ENCODE measurements at regions of chr9 and their contacts with region 1.

Region 1: DNA sequence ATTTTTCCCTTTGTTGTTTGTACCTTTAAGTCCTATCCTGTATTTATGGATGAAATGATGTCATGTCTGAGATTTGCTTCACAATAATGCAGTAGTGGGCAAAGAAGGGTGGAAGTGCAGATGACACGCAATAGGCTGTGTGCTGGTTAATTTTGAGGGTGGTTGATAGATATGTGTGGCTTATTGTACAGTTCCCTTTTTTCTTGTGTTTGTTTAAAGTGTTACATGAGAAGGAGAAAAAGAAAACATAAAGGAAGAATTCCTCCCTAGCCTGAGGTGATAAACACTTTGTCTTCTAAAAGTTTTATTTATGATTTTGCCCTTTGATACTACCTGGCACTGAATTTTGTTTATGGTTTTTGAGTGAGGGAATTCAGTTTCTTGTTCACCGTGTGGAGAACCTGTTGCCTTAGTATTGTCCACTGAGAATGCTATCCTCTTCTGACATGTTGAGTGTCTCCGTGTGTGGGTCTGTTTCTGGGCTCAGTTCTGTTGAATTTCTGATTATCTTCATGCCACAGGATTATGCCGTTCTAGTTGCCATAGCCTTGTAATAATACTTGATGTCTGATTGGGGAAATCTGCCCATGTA is 52.3 kb upstream of the FAM120AOS start:
- DNase-seq: no peak
- H3K4me3 Mint-ChIP-seq: no peak overlapping the region
- H3K27ac Mint-ChIP-seq: no peak overlapping the region
- H3K4me1 Mint-ChIP-seq: peaks cover 57% of the 10 kb centered on the region
- H3K27me3 Mint-ChIP-seq: no peaks in the 10 kb centered on the region

Region 2: GRCh38 chr9:93463638-93464248 is 41.9 kb before region 1 on chr9:
- intact Hi-C with region 1: loop called (anchors 2 kb)
- DNase-seq: no peak
- H3K4me3 Mint-ChIP-seq: peak overlapping the region; percentile 72
- H3K27ac Mint-ChIP-seq: peak overlapping the region; percentile 87
- H3K4me1 Mint-ChIP-seq: peaks cover 88% of the 10 kb centered on the region
- H3K27me3 Mint-ChIP-seq: no peaks in the 10 kb centered on the region